ENCODE measurements at regions of chr11 and their contacts with region 1.

Region 1: GRCh38 chr11:114377612-114378267 is 22.6 kb downstream of the C11orf71 start:
- DNase-seq: no peak
- H3K4me3 ChIP-seq: no peak overlapping the region
- H3K27ac ChIP-seq: no peak overlapping the region
- H3K4me1 ChIP-seq: no peaks in the 10 kb centered on the region
- H3K27me3 ChIP-seq: no peaks in the 10 kb centered on the region
- CTCF ChIP-seq: no peak
- EP300 ChIP-seq: no peak
- POLR2A ChIP-seq: no peak

Region 2: GRCh38 chr11:114080219-114080618 is 297.5 kb before region 1 on chr11:
- intact Hi-C with region 1: no loop called
- DNase-seq: peak in 1 of 5 donors; percentile 40
- H3K4me3 ChIP-seq: no peak overlapping the region
- H3K27ac ChIP-seq: peak overlapping the region; percentile 66 to 75
- H3K4me1 ChIP-seq: peaks cover 50% of the 10 kb centered on the region
- H3K27me3 ChIP-seq: no peaks in the 10 kb centered on the region
- CTCF ChIP-seq: no peak
- EP300 ChIP-seq: no peak
- POLR2A ChIP-seq: no peak

Region 3: GRCh38 chr11:114159802-114160632 is 217.7 kb before region 1 on chr11:
- intact Hi-C with region 1: no loop called
- DNase-seq: peak; percentile 99 to 100 (median 100)
- H3K4me3 ChIP-seq: peak overlapping the region; percentile 7
- H3K27ac ChIP-seq: peak overlapping the region; percentile 85 to 89
- H3K4me1 ChIP-seq: peaks cover 54% of the 10 kb centered on the region
- H3K27me3 ChIP-seq: no peaks in the 10 kb centered on the region
- CTCF ChIP-seq: peak in 1 of 3 donors; percentile 6
- EP300 ChIP-seq: peak; percentile 99
- POLR2A ChIP-seq: peak; percentile 29

Region 4: GRCh38 chr11:116122697-116123472 is 1745.1 kb after region 1 on chr11:
- intact Hi-C with region 1: loop called in 1 of 4 experiments (anchors 10 kb)
- DNase-seq: no peak
- H3K4me3 ChIP-seq: no peak overlapping the region
- H3K27ac ChIP-seq: no peak overlapping the region
- H3K4me1 ChIP-seq: no peaks in the 10 kb centered on the region
- H3K27me3 ChIP-seq: no peaks in the 10 kb centered on the region
- CTCF ChIP-seq: no peak
- EP300 ChIP-seq: no peak
- POLR2A ChIP-seq: no peak

Measured in ovary (tissue), 10 donors.